Activated CD8-positive, alpha-beta T cell treated with anti-CD3 and anti-CD28 coated beads for 36 hours (primary cell): ENCODE measurements at regions of chr21 and their contacts with region 1.

Region 1: DNA sequence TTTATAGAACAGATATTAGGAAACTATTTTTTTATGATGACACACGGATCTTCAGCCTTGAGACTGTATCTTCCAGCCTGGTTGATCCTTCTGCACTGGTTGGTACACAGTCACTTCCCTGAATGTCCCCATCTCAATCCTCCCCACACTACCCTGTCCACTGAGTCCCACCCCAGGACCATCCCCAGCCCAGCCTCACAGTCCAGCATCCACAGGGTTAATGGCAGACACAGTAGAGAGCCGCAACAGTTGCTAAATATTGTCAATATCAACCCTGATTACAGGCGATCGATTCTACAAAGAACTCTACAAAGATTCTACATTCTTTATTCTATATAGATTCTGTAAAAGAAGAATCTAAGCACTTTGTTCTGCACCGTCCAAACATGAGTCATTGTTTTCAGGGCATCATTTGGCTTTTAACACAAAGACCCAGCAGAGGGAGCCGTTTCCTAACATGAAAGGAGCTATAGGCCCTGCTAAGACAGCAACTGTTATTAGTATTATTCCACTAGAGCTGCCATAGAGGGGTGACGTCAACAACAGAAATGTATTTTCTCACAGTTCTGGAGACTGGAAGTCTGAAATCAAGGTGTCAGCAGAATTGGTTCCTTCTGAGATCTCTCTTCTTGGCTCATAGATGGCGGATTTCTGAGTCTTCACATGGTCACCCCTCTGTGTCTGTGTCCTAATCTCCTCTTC is 30.1 kb upstream of the IFNAR2 start:
- DNase-seq: peak; percentile 91
- ATAC-seq: peak; percentile 86
- H3K4me3 Mint-ChIP-seq: no peak overlapping the region
- H3K27ac Mint-ChIP-seq: no peak overlapping the region
- H3K4me1 Mint-ChIP-seq: peaks cover 36% of the 10 kb centered on the region
- H3K27me3 Mint-ChIP-seq: no peaks in the 10 kb centered on the region
- CTCF ChIP-seq: peak; percentile 81

Region 2: DNA sequence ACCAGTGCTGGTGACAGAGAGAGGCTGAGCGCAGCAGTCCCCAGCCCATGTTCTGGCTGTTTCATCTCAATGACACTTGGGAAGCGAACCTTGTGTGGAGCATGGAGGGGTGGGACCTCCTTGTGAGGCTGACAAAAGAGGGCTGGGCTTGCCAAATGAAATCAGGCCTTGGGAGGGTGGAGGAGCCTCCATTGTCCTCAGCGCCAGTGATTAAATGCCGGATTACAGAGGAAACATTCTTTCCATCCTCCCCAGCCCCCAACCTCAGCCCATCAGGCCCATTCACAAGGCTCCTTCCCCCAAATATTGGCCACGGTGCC is 364.8 kb before region 1 on chr21:
- CTCF ChIA-PET with region 1: interaction called, 37 read pairs
- POLR2A ChIA-PET with region 1: no interaction called
- intact Hi-C with region 1: loop called (anchors 5 kb)
- DNase-seq: no peak
- ATAC-seq: no peak
- H3K4me3 Mint-ChIP-seq: no peak overlapping the region
- H3K27ac Mint-ChIP-seq: no peak overlapping the region
- H3K4me1 Mint-ChIP-seq: no peaks in the 10 kb centered on the region
- H3K27me3 Mint-ChIP-seq: peaks cover 1% of the 10 kb centered on the region
- CTCF ChIP-seq: no peak

Region 3: GRCh38 chr21:32994305-32994704 is 205.4 kb before region 1 on chr21:
- CTCF ChIA-PET with region 1: interaction called, 18 read pairs
- POLR2A ChIA-PET with region 1: no interaction called
- intact Hi-C with region 1: no loop called
- DNase-seq: no peak
- ATAC-seq: no peak
- H3K4me3 Mint-ChIP-seq: no peak overlapping the region
- H3K27ac Mint-ChIP-seq: no peak overlapping the region
- H3K4me1 Mint-ChIP-seq: no peaks in the 10 kb centered on the region
- H3K27me3 Mint-ChIP-seq: peaks cover 12% of the 10 kb centered on the region
- CTCF ChIP-seq: peak; percentile 57

Region 4: GRCh38 chr21:33109574-33110339 is 89.9 kb before region 1 on chr21:
- CTCF ChIA-PET with region 1: no interaction called
- POLR2A ChIA-PET with region 1: no interaction called
- intact Hi-C with region 1: no loop called
- DNase-seq: peak; percentile 29
- ATAC-seq: peak; percentile 53
- H3K4me3 Mint-ChIP-seq: no peak overlapping the region
- H3K27ac Mint-ChIP-seq: no peak overlapping the region
- H3K4me1 Mint-ChIP-seq: peaks cover 3% of the 10 kb centered on the region
- H3K27me3 Mint-ChIP-seq: peaks cover 28% of the 10 kb centered on the region
- CTCF ChIP-seq: no peak

Region 5: DNA sequence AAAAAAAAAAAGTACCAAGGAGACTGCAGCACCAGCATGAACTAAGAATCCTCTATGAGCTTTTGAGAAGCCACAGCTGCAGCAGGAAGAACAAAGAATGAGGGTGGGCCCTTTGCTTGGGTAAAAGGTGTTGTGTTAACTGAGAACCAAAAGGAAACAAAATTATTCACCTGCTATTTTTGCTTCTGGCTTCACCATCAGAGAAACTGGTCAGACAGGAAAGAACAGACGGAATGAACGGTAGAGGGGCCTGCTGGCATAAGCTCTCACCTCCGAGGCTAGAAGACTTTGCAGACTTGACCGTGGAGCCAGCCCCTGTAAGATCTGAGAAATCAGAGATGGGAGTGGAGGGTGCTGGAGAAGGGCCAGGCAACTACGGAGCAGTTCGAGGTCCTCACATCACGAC is 94.1 kb after region 1 on chr21:
- CTCF ChIA-PET with region 1: interaction called, 11 read pairs
- POLR2A ChIA-PET with region 1: no interaction called
- intact Hi-C with region 1: no loop called
- DNase-seq: no peak
- ATAC-seq: peak; percentile 27
- H3K4me3 Mint-ChIP-seq: no peak overlapping the region
- H3K27ac Mint-ChIP-seq: peak overlapping the region; percentile 25
- H3K4me1 Mint-ChIP-seq: peaks cover 28% of the 10 kb centered on the region
- H3K27me3 Mint-ChIP-seq: no peaks in the 10 kb centered on the region
- CTCF ChIP-seq: no peak

Region 6: DNA sequence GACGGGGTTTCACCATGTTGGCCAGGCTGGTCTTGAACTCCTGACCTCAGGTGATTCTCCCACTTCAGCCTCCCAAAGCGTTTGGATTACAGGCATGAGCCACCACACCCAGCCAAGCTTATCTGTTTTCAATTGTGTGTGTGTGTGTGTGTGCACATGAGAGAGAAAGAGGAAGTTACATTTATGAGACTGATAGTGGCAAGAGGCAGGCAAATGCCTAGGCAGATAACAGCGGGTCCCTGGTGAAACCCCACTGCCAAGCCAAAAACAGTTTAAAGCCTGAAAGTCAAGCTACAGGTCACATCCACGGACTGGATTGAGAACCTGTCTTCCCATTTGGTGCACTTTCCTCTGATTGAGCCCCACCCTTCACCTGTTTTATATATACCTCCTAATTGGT is 168.5 kb after region 1 on chr21:
- CTCF ChIA-PET with region 1: interaction called, 14 read pairs
- POLR2A ChIA-PET with region 1: no interaction called
- intact Hi-C with region 1: loop called (anchors 5 kb)
- DNase-seq: no peak
- ATAC-seq: no peak
- H3K4me3 Mint-ChIP-seq: no peak overlapping the region
- H3K27ac Mint-ChIP-seq: no peak overlapping the region
- H3K4me1 Mint-ChIP-seq: peaks cover 2% of the 10 kb centered on the region
- H3K27me3 Mint-ChIP-seq: no peaks in the 10 kb centered on the region
- CTCF ChIP-seq: no peak

Region 7: DNA sequence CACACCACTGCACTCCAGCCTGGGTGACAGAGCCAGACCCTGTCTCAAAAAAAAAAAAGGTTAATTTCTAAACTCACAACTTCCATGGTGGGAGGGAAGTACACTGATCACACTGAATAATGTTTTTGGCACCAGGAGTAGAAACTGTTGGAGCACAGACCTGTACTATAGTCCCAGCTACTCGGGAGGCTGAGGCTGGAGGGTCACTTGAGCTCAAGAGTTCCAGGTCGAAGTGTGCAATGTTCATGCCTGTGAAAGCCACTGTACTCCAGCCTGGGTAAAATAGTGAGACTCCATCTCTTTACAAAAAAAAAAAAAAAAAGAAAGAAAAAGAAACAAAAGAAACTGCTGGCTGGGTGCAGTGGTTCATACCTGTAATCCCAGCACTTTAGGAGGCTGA is 244.8 kb after region 1 on chr21:
- CTCF ChIA-PET with region 1: interaction called, 70 read pairs
- POLR2A ChIA-PET with region 1: interaction called, 4 read pairs
- intact Hi-C with region 1: loop called (anchors 2 kb)
- DNase-seq: no peak
- ATAC-seq: no peak
- H3K4me3 Mint-ChIP-seq: no peak overlapping the region
- H3K27ac Mint-ChIP-seq: no peak overlapping the region
- H3K4me1 Mint-ChIP-seq: peaks cover 7% of the 10 kb centered on the region
- H3K27me3 Mint-ChIP-seq: no peaks in the 10 kb centered on the region
- CTCF ChIP-seq: no peak